ENCODE measurements at regions of chr17 and their contacts with region 1.

Region 1: GRCh38 chr17:20315821-20316220 is 151.5 kb downstream of the LGALS9B start:
- DNase-seq: no peak
- ATAC-seq: no peak
- H3K4me3 Mint-ChIP-seq: no peak overlapping the region
- H3K27ac Mint-ChIP-seq: no peak overlapping the region
- H3K4me1 Mint-ChIP-seq: peaks cover under 1% of the 10 kb centered on the region
- H3K27me3 Mint-ChIP-seq: no peaks in the 10 kb centered on the region

Region 2: GRCh38 chr17:20121359-20122253 is 194.2 kb before region 1 on chr17:
- CTCF ChIA-PET with region 1: interaction called, 18 read pairs
- DNase-seq: peak; percentile 73
- ATAC-seq: peak; percentile 64
- H3K4me3 Mint-ChIP-seq: no peak overlapping the region
- H3K27ac Mint-ChIP-seq: no peak overlapping the region
- H3K4me1 Mint-ChIP-seq: peaks cover 2% of the 10 kb centered on the region
- H3K27me3 Mint-ChIP-seq: no peaks in the 10 kb centered on the region

Region 3: GRCh38 chr17:20241831-20242230 is 74.0 kb before region 1 on chr17:
- CTCF ChIA-PET with region 1: no interaction called
- DNase-seq: no peak
- ATAC-seq: no peak
- H3K4me3 Mint-ChIP-seq: no peak overlapping the region
- H3K27ac Mint-ChIP-seq: no peak overlapping the region
- H3K4me1 Mint-ChIP-seq: no peaks in the 10 kb centered on the region
- H3K27me3 Mint-ChIP-seq: no peaks in the 10 kb centered on the region

Region 4: GRCh38 chr17:20291853-20292252 is 24.0 kb before region 1 on chr17:
- CTCF ChIA-PET with region 1: no interaction called
- DNase-seq: no peak
- ATAC-seq: no peak
- H3K4me3 Mint-ChIP-seq: no peak overlapping the region
- H3K27ac Mint-ChIP-seq: no peak overlapping the region
- H3K4me1 Mint-ChIP-seq: no peaks in the 10 kb centered on the region
- H3K27me3 Mint-ChIP-seq: no peaks in the 10 kb centered on the region

Region 5: GRCh38 chr17:20302246-20302917 is 13.4 kb before region 1 on chr17:
- CTCF ChIA-PET with region 1: no interaction called
- DNase-seq: no peak
- ATAC-seq: no peak
- H3K4me3 Mint-ChIP-seq: no peak overlapping the region
- H3K27ac Mint-ChIP-seq: no peak overlapping the region
- H3K4me1 Mint-ChIP-seq: no peaks in the 10 kb centered on the region
- H3K27me3 Mint-ChIP-seq: no peaks in the 10 kb centered on the region

Measured in activated CD8-positive, alpha-beta memory T cell treated with anti-CD3 and anti-CD28 coated beads, Interleukin-2, amount 10 ng/mL, durations not matched to agents 7 days and 5 days (primary cell).